ENCODE measurements at regions of chr1 and their contacts with region 1.

Region 1: DNA sequence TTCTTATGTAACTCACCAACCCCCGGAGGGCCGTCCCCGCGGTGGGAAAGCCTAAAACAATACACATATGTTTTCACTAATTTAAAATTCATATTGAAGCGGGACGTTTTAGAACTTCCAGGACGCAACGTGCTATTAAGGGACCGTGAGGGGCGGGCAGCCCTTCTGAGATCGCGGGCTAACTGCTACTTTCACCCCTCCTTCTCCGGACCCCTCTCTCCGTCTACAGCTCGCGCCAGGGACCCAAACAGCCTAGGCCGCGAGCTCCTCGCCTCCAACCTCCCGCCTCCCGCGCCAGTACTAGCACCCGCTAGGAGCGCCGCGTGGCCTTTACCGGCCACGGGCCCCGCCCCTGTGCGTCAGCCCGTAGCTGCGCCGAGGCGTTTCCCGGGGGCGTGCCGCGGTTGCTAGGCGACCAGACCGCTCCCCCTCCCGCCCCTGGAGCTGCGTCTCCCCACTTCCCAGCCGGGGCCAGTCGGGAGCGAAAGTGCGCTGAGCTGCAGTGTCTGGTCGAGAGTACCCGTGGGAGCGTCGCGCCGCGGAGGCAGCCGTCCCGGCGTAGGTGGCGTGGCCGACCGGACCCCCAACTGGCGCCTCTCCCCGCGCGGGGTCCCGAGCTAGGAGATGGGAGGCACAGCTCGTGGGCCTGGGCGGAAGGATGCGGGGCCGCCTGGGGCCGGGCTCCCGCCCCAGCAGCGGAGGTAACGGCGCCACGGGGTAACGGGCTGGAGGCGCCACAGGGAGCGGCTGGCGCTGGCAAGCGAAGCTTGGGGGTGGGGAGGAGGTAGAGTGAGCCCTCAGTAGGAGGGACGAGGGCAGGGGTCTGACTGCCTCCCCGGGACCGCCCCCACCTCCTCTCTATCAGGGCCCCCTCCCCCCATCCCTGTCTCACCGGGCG is at the start of gene DYRK3:
- DNase-seq: peak; percentile 93
- ATAC-seq: peak; percentile 93
- H3K4me3 Mint-ChIP-seq: peak within 1 kb of the TSS; percentile 78
- H3K27ac Mint-ChIP-seq: peak within 1 kb of the TSS; percentile 88
- H3K4me1 Mint-ChIP-seq: peaks cover 25% of the 10 kb centered on the region
- H3K27me3 Mint-ChIP-seq: peaks cover 28% of the 10 kb centered on the region
- CTCF ChIP-seq: no peak
- total RNA-seq, gene DYRK3: 4.7 to 4.9 TPM

Region 2: GRCh38 chr1:206573319-206573718 is 62.0 kb before region 1 on chr1:
- CTCF ChIA-PET with region 1: no interaction called
- POLR2A ChIA-PET with region 1: no interaction called
- intact Hi-C with region 1: no loop called
- DNase-seq: no peak
- ATAC-seq: no peak
- H3K4me3 Mint-ChIP-seq: peak overlapping the region; percentile 18
- H3K27ac Mint-ChIP-seq: peak overlapping the region; percentile 100
- H3K4me1 Mint-ChIP-seq: peaks cover 92% of the 10 kb centered on the region
- H3K27me3 Mint-ChIP-seq: no peaks in the 10 kb centered on the region
- CTCF ChIP-seq: no peak

Region 3: DNA sequence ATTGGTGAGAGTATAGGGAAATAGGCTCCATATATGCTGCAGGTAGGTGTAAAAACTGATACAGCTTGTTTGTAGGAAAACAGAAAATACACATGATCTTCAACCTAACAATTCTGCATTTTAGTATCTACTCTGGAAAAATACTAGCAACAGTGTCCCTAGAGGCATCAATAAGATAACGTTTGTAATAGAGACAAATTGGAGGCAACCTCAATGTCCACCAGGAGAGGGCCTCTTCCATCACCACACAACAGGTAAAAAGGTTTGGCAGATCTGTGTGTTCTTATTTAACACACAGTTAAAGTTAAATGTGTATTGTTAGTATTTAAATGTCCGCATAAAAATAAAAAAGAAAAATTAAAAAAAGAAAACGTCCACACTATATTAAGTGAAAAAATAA is 28.5 kb before region 1 on chr1:
- CTCF ChIA-PET with region 1: interaction called, 66 read pairs
- POLR2A ChIA-PET with region 1: interaction called, 3 read pairs
- intact Hi-C with region 1: no loop called
- DNase-seq: peak; percentile 49
- ATAC-seq: no peak
- H3K4me3 Mint-ChIP-seq: no peak overlapping the region
- H3K27ac Mint-ChIP-seq: peak overlapping the region; percentile 36
- H3K4me1 Mint-ChIP-seq: peaks cover 44% of the 10 kb centered on the region
- H3K27me3 Mint-ChIP-seq: no peaks in the 10 kb centered on the region
- CTCF ChIP-seq: peak; percentile 53

Region 4: DNA sequence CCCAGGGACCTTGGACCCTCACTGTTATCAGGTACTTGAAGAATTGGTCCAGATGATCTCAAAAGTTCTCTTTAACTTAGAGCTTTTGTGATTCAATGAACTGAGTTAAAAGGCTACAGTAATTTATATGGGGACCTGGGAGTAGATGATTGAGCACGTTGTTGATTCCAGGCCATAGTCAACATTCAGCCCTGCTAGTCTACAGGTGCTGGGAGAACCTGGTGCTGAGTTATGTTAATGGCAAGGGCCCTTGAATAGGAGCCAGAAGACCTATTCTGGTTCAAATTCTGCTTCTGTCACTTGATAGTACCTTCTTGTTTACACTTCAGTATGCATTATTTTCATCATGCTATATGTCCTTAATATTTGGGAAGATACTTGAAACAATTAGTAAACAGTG is 11.2 kb after region 1 on chr1:
- CTCF ChIA-PET with region 1: interaction called, 15 read pairs
- POLR2A ChIA-PET with region 1: interaction called, 3 read pairs
- intact Hi-C with region 1: no loop called
- DNase-seq: no peak
- ATAC-seq: no peak
- H3K4me3 Mint-ChIP-seq: no peak overlapping the region
- H3K27ac Mint-ChIP-seq: no peak overlapping the region
- H3K4me1 Mint-ChIP-seq: peaks cover 2% of the 10 kb centered on the region
- H3K27me3 Mint-ChIP-seq: no peaks in the 10 kb centered on the region
- CTCF ChIP-seq: no peak

Region 5: DNA sequence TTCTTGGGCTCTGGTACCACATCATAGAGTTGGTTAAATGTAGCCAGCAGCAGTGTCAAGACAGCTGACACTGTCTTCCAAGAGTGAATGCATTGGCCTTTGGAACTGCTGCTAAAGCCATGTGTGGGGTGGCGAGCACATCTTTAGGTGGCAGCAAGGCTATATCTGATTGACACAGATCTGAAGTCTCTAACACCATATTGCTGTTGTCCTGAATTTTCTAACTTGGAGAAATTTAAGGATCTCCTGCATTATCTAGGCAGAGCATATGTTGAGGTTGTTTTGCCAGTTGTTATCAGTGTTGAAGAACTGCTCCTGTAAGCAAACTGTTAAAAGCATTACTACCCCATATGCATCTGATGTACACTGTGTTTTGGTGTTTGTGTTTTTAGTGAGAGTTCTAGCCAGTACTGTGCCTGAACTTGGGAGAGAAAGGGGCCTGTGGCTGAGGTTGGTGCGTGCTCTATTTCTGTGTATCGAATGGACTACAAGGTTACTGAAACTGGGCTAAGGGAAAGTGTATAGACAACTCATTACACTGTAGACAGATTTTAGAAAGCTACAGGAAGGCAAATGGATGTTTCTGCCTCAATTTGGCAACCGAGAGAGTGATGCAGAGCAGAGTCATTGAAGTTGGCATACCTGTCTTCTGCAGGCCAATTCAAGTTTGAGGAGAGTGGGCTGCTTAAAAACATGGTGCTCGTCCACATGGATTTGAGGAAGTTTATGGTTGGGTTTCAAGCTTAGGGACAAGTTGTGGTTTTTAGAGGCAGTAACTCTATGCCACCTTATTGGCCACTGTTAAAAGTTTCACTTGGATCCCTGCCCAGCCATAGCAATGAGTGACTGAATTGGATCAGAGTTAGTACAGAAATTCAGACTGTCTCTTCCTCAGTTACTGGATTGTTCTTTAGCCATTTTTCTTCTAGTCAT is 16.9 kb after region 1 on chr1:
- CTCF ChIA-PET with region 1: interaction called, 340 read pairs
- POLR2A ChIA-PET with region 1: interaction called, 3 read pairs
- intact Hi-C with region 1: no loop called
- DNase-seq: no peak
- ATAC-seq: no peak
- H3K4me3 Mint-ChIP-seq: no peak overlapping the region
- H3K27ac Mint-ChIP-seq: no peak overlapping the region
- H3K4me1 Mint-ChIP-seq: no peaks in the 10 kb centered on the region
- H3K27me3 Mint-ChIP-seq: peaks cover 5% of the 10 kb centered on the region
- CTCF ChIP-seq: no peak

Region 6: DNA sequence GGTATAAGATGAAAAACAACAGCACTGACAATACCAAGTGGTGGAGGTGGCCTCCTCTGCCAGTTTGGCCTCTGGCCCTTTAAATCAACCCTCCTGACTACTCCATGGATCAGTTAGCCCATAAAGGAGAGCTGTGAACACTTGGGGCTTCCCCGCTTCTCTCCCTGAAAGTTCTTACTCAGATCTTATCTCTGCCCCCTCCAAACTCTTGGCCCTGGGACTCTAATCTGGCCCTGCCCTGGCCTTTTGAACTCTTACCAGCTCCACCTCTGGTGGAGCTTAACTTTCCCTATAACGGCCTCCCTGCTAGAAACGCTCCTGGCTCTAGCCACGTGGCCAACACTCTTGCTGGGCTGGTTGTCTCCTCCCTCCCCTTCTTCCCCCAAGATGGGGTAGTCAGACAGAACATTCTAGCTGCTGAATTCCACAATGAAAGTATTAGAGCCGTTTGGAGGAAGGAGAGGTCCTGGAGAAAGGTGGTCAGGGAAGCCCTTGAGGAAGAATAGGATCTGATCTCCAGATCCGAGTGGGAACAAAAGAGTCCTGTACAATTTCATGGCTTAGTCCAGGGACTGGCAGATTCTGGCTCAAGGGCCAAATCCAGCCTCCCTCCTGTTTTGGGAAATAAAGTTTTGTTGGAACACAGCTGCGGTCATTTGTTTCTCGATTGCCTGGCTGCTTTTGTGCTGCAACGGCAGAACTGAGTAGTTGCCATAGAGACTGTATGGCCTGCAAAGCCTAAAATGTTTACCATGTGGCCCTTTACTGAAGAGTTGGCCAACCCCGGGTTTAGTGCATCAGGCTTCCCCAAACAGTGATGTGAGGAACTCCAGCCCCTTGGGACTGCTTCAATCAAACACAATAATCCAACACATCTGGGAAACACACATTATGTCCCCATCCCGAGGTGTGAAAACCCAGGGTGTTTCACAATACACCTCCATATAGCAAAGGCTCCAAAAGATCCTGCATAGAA is 320.4 kb after region 1 on chr1:
- CTCF ChIA-PET with region 1: no interaction called
- POLR2A ChIA-PET with region 1: no interaction called
- intact Hi-C with region 1: no loop called
- DNase-seq: peak; percentile 16
- ATAC-seq: peak; percentile 42
- H3K4me3 Mint-ChIP-seq: no peak overlapping the region
- H3K27ac Mint-ChIP-seq: no peak overlapping the region
- H3K4me1 Mint-ChIP-seq: peaks cover 14% of the 10 kb centered on the region
- H3K27me3 Mint-ChIP-seq: no peaks in the 10 kb centered on the region
- CTCF ChIP-seq: no peak

Region 7: DNA sequence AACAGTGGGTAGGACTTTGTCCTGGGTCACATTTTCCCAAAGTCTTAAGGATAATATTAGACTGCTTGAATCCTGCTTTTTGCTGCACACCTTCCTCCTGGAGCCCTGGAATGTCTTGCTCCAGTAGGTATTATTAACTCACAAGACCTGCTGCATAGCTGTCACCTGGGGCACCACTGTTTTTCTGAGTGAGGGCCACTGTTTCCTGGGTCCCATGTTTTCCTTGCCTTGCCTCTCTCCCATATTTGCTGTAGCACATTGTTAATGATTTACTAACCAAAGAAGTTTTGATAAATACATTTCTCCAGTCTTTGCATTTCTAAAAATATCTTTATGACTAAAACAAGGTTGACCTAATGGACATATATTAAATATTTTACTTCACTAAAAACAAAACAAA is 357.5 kb after region 1 on chr1:
- CTCF ChIA-PET with region 1: no interaction called
- POLR2A ChIA-PET with region 1: no interaction called
- intact Hi-C with region 1: no loop called
- DNase-seq: no peak
- ATAC-seq: no peak
- H3K4me3 Mint-ChIP-seq: no peak overlapping the region
- H3K27ac Mint-ChIP-seq: no peak overlapping the region
- H3K4me1 Mint-ChIP-seq: no peaks in the 10 kb centered on the region
- H3K27me3 Mint-ChIP-seq: peaks cover 7% of the 10 kb centered on the region
- CTCF ChIP-seq: no peak